Activated naive CD4-positive, alpha-beta T cell treated with anti-CD3 and anti-CD28 coated beads, Interleukin-2, amount 10 ng/mL, durations not matched to agents 7 days and 5 days (primary cell): ENCODE measurements at regions of chr6 and their contacts with region 1.

Region 1: DNA sequence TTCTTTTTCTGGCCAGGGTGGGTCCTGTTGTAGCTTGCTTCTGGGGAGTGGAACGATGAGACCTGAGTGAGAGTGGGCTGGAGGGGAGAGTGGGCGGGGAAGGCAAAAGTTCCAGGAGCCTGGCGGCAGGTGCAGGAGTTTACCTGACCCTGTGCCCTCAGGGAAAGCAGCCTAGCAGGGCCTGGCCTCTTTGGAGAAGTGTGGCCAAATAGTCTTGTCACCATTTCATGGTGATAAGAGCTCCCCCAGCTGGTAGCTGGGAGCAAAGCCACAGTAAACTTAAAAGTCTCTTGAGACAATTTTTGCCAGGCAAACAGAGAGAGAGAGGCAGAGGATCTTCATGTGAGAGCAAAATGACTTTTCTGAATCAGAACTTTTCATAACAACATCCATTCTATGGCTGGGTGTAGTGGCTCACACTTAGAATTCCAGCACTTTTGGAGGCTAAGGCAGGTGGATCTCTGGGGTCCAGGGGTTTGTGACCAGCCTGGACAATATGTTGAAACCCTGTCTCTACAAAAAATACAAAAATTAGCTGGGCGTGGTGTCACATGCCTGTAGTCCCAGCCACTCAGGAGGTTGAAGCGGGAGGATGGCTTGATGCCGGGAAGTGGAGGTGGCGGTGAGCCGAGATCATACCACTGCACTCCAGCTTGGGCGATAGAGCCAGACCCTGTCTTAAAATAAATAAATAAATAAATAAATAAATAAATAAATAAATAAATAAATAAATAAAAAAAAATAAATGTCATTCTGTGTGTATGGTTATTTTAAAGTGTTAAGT is 161.8 kb upstream of the SCGN start:
- DNase-seq: peak; percentile 81
- H3K4me3 Mint-ChIP-seq: no peak overlapping the region
- H3K27ac Mint-ChIP-seq: no peak overlapping the region
- H3K4me1 Mint-ChIP-seq: peaks cover 7% of the 10 kb centered on the region
- H3K27me3 Mint-ChIP-seq: no peaks in the 10 kb centered on the region

Region 2: GRCh38 chr6:24802271-24803059 is 687.7 kb before region 1 on chr6:
- CTCF ChIA-PET with region 1: no interaction called
- DNase-seq: no peak
- H3K4me3 Mint-ChIP-seq: no peak overlapping the region
- H3K27ac Mint-ChIP-seq: peak overlapping the region; percentile 35
- H3K4me1 Mint-ChIP-seq: peaks cover 15% of the 10 kb centered on the region
- H3K27me3 Mint-ChIP-seq: no peaks in the 10 kb centered on the region

Region 3: DNA sequence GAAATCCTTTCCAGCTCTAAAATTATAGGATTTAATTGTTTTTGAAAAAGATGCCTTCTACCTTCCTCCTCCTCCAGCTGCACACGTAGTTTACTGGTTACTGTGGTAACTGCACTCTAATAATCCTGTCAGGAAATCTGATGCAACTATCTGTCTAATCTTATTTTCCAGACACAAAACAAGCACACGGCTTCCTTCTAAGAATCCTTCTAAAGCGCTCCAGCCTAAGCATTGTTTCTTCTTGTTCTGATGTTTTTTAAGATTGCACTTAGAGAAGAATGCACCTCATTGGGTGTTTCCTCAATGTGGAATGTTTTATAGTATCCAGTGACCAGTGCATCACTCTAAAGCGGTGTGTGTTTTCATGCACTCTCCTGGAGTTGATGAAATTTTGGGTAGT is 147.4 kb before region 1 on chr6:
- CTCF ChIA-PET with region 1: interaction called, 19 read pairs
- DNase-seq: no peak
- H3K4me3 Mint-ChIP-seq: no peak overlapping the region
- H3K27ac Mint-ChIP-seq: no peak overlapping the region
- H3K4me1 Mint-ChIP-seq: peaks cover 2% of the 10 kb centered on the region
- H3K27me3 Mint-ChIP-seq: no peaks in the 10 kb centered on the region